Activated naive CD4-positive, alpha-beta T cell treated with anti-CD3 and anti-CD28 coated beads for 36 hours (primary cell): ENCODE measurements at regions of chr10 and their contacts with region 1.

Region 1: GRCh38 chr10:14954001-14954770 is at the start of gene DCLRE1C:
- DNase-seq: peak; percentile 91
- H3K4me3 Mint-ChIP-seq: peak within 1 kb of the TSS; percentile 90
- H3K27ac Mint-ChIP-seq: peak within 1 kb of the TSS; percentile 93
- H3K4me1 Mint-ChIP-seq: peaks cover 54% of the 10 kb centered on the region
- H3K27me3 Mint-ChIP-seq: no peaks in the 10 kb centered on the region
- total RNA-seq, gene DCLRE1C: 9.8 to 13.9 TPM

Region 2: DNA sequence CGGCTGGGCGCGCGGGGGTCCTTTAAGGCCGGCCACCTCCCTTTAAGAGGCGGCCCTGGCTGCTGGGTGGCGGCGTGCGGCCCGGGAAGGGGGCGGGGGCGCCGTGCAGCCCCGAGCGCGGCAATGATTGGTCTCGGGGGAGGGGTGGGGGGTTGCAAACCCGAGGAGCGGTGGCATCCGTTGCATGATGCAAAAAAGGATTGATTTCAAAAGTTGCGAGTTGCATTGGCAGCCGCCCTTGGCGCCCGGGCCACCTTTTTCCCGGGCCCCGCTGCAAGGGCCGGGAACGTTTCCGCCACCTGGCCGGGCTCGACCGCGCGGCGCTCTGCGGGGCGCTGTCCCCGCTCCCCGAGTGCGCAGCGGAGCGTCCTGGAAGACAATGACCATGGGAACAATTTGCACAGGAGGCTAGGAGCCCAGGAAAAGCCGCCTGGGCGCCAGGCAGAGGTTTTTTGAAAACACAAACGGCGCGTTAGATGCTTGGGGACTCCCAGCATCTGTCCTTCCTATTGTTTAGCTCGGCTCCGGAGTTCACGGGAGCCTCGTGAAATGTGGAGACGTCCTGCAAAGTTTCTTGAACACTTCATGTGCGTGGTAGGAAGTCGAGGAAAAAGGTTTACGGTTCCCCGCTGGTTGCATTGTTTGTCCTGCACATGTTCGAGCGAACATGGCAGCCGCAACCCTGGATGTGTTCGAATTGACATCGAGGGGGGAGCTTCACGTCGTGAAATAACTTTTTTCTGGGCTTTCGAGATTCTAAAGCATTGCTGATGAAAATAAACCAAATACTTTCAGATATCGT is 1605.8 kb before region 1 on chr10 and contains the start of gene SEPHS1:
- CTCF ChIA-PET with region 1: no interaction called
- intact Hi-C with region 1: loop called (anchors 5 kb)
- DNase-seq: peak; percentile 91
- H3K4me3 Mint-ChIP-seq: peak within 1 kb of the TSS; percentile 88
- H3K27ac Mint-ChIP-seq: peak within 1 kb of the TSS; percentile 94
- H3K4me1 Mint-ChIP-seq: peaks cover 57% of the 10 kb centered on the region
- H3K27me3 Mint-ChIP-seq: no peaks in the 10 kb centered on the region
- total RNA-seq, gene SEPHS1: 75.6 to 79.6 TPM

Region 3: GRCh38 chr10:14665304-14665703 is 288.9 kb before region 1 on chr10:
- CTCF ChIA-PET with region 1: no interaction called
- intact Hi-C with region 1: loop called (anchors 5 kb)
- DNase-seq: peak; percentile 65
- H3K4me3 Mint-ChIP-seq: no peak overlapping the region
- H3K27ac Mint-ChIP-seq: peak overlapping the region; percentile 78
- H3K4me1 Mint-ChIP-seq: peaks cover 53% of the 10 kb centered on the region
- H3K27me3 Mint-ChIP-seq: no peaks in the 10 kb centered on the region

Region 4: DNA sequence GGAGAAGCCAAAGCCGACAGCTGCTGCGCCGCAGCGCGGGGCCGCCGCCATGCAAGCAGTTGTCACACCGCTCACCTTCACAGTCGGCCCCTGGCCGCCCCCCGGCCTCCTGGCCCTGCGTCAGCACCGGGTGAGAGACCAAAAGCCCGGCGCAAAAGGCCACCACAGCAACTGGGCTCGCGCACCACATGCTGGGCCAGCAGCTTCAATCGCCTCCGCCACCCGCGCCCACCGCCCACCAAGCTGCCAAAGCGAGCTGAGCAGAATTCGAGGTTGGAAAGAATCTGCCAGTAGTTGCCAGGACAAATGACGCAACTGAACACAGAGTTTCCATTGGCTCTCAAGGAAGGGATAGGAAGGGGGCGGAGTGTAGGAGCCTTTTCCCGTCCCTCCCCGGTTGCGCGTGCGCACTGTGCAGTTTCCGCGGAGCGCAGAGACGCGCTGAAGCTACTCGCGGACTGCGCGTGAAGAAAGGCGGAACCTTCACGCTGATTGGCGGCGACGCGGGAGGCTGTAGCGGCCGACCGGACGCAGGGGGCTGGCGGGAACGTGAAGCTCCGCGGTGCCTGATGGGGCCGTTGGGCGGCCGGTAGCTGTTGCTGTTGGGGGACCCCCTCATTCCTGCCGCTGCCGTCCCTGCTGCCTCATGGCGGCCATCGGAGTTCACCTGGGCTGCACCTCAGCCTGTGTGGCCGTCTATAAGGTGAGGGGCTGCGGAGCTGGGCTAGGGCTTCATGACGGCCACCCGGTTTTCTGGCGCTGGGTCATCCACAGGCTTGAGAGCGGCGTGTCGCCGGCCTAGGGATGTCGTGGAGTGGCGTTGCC is 116.2 kb before region 1 on chr10 and contains the starts of genes CDNF, HSPA14 and MSANTD7:
- CTCF ChIA-PET with region 1: no interaction called
- intact Hi-C with region 1: loop called (anchors 1 kb)
- DNase-seq: peak; percentile 99
- H3K4me3 Mint-ChIP-seq: peak within 1 kb of the TSS; percentile 92
- H3K27ac Mint-ChIP-seq: peak within 1 kb of the TSS; percentile 93
- H3K4me1 Mint-ChIP-seq: peaks cover 22% of the 10 kb centered on the region
- H3K27me3 Mint-ChIP-seq: no peaks in the 10 kb centered on the region
- total RNA-seq, gene CDNF: 1.6 to 1.8 TPM
- total RNA-seq, gene HSPA14: 28.1 to 29.9 TPM
- total RNA-seq, gene MSANTD7: 19.6 to 21.3 TPM

Region 5: DNA sequence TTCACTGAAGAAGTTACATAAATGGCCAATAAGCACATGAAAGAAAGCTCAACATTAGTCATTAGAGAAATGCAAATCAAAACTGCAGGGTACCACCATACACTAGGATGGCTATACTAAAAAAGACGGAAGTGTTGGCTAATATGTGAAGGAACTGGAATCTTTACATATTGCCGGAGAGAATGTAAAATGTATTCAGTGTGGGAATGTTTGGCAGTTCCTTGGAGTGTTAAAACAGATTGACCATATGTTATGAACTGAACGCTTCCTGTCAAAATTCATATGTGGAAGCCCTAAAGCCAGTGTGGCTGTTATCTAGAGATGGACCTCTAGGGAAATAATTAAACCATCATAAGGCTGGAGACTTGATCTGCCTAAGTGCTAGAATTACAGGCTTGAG is 42.4 kb before region 1 on chr10:
- CTCF ChIA-PET with region 1: no interaction called
- intact Hi-C with region 1: loop called (anchors 5 kb)
- DNase-seq: no peak
- H3K4me3 Mint-ChIP-seq: no peak overlapping the region
- H3K27ac Mint-ChIP-seq: no peak overlapping the region
- H3K4me1 Mint-ChIP-seq: peaks cover 15% of the 10 kb centered on the region
- H3K27me3 Mint-ChIP-seq: no peaks in the 10 kb centered on the region

Region 6: GRCh38 chr10:15097011-15097812 is 143.0 kb after region 1 on chr10 and contains the start of gene RPP38:
- CTCF ChIA-PET with region 1: no interaction called
- intact Hi-C with region 1: loop called (anchors 1 kb)
- DNase-seq: peak; percentile 96
- H3K4me3 Mint-ChIP-seq: peak within 1 kb of the TSS; percentile 97
- H3K27ac Mint-ChIP-seq: peak within 1 kb of the TSS; percentile 94
- H3K4me1 Mint-ChIP-seq: peaks cover 36% of the 10 kb centered on the region
- H3K27me3 Mint-ChIP-seq: no peaks in the 10 kb centered on the region
- total RNA-seq, gene RPP38: 15.6 to 16.3 TPM